CD4-positive, alpha-beta T cell (primary cell): ENCODE measurements at regions of chr15 and their contacts with region 1.

Region 1: DNA sequence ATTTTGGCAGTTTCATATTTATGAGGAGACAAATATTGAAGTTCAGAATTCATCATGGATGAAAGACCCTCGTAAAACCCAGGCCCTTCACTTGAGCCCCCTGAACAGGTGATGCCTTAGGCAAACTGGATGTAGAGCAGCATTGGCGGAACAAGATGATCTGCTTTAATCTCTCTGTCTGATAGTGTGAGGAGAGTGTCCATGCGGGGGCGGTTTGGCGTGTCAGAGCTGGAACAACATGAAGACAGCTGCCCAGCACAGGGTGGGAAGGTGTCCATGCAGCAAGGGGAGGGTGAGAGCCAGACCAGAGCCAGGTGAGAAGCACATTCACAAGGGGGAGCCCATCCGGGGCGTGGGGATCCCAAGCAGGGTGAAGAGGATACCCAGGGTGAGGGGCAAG is 31.8 kb upstream of the ANP32A start:
- DNase-seq: no peak
- ATAC-seq: no peak
- H3K4me3 ChIP-seq: no peak overlapping the region
- H3K4me3 Mint-ChIP-seq: no peak overlapping the region
- H3K27ac ChIP-seq: no peak overlapping the region
- H3K27ac Mint-ChIP-seq: no peak overlapping the region
- H3K4me1 ChIP-seq: no peaks in the 10 kb centered on the region
- H3K4me1 Mint-ChIP-seq: no peaks in the 10 kb centered on the region
- H3K27me3 ChIP-seq: peaks cover 0 to 5% of the 10 kb centered on the region in 2 experiments
- H3K27me3 Mint-ChIP-seq: peaks cover 6% of the 10 kb centered on the region
- CTCF ChIP-seq: no peak

Region 2: DNA sequence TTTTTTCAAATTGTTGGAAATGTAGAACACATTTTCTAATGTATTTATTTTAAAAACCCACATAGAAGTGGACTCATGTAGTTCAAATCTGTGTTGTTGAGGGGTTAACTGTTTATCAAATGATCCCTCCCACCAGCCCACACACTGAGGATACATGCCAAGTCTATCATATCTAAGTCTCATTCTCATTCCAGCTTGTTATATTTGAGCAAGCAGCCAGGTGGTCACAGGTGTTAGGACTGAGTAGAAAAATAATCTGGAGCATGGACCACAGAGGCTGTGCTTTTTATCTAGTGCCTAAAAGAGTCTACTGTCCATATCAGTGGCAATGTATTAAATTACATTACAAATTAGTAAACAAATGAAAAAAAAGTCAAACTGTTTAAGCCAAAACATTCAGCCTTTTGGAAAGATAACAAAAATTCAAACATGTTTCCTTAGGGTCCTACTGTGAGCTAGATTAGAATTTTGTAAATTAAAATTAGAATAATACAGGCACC is 57.2 kb after region 1 on chr15:
- CTCF ChIA-PET with region 1: no interaction called
- POLR2A ChIA-PET with region 1: no interaction called
- intact Hi-C with region 1: loop called in 1 of 2 experiments (anchors 10 kb)
- DNase-seq: no peak
- ATAC-seq: no peak
- H3K4me3 ChIP-seq: no peak overlapping the region
- H3K4me3 Mint-ChIP-seq: no peak overlapping the region
- H3K27ac ChIP-seq: no peak overlapping the region
- H3K27ac Mint-ChIP-seq: no peak overlapping the region
- H3K4me1 ChIP-seq: no peaks in the 10 kb centered on the region
- H3K4me1 Mint-ChIP-seq: no peaks in the 10 kb centered on the region
- H3K27me3 ChIP-seq: peaks cover 6 to 11% of the 10 kb centered on the region in 2 experiments
- H3K27me3 Mint-ChIP-seq: peaks cover 35% of the 10 kb centered on the region
- CTCF ChIP-seq: no peak